H1 (cell line): ENCODE measurements at regions of chr2 and their contacts with region 1.

Region 1: DNA sequence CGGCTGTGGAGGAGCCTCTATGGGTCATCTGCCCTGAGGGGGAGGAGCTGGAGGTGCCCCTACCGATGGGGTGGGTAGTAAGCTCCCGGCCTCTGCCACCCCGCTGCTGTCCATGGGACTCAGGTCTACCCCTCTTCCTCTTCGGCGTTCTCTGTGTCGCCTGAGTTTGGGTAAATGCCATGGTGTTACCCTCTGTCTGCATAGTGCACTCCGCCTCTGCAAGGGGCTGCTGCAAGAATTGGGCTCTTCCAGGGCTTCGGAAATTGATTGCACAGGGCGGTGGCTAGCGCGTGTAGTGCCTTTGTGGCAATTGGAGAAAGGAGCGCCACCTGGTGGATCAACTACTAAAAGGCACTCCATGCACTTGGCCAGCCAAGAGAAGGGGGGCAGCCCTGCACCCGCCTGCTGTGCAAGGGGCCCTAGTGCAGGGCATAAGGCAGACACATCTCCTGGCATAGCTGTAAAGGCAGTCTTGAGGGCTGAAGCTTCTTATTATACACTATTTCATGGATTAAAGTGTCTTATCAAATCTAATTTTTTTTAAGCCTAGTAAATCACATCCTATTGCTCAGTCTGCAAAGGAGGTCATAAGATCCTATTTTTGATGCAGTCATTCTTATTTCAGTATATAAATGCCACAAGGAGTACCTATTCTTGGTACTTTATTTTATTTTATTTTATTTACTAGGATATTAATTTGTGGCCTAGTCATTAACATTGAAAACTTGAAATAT is 308.9 kb downstream of the PDE11A start:
- DNase-seq: peak; percentile 31 to 93
- H3K4me3 ChIP-seq: peak overlapping the region; percentile 15 to 51 (median 27); a peak in 7 of 8 replicates
- H3K27ac ChIP-seq: no peak overlapping the region
- H3K4me1 ChIP-seq: peaks cover 0 to 6% (median under 1%) of the 10 kb centered on the region in 4 experiments; a peak in 5 of 7 replicates
- H3K27me3 ChIP-seq: peaks cover 0 to 2% (median 1%) of the 10 kb centered on the region in 4 experiments; a peak in 2 of 7 replicates
- CTCF ChIP-seq: peak; percentile 74 to 93 (median 78)
- EP300 ChIP-seq: no peak
- POLR2A ChIP-seq: no peak
- RAD21 ChIP-seq: peak; percentile 43 to 65

Region 2: GRCh38 chr2:177263451-177264208 is 500.1 kb before region 1 on chr2:
- CTCF ChIA-PET with region 1: no interaction called
- POLR2A ChIA-PET with region 1: no interaction called
- DNase-seq: peak; percentile 44 to 88
- H3K4me3 ChIP-seq: peak overlapping the region; percentile 71 to 82 (median 78)
- H3K27ac ChIP-seq: peak overlapping the region; percentile 78; the same call in 1 of the 2 replicates
- H3K4me1 ChIP-seq: peaks cover 0 to 2% (median 2%) of the 10 kb centered on the region in 4 experiments; a peak in 3 of 7 replicates
- H3K27me3 ChIP-seq: no peaks in the 10 kb centered on the region
- CTCF ChIP-seq: peak; percentile 47 to 57 (median 50); a peak in 3 of 4 replicates
- EP300 ChIP-seq: no peak; a peak in 1 of 3 replicates
- POLR2A ChIP-seq: peak; percentile 34 to 73
- RAD21 ChIP-seq: peak; percentile 31 to 55

Region 3: GRCh38 chr2:177407031-177407430 is 356.7 kb before region 1 on chr2:
- CTCF ChIA-PET with region 1: no interaction called
- POLR2A ChIA-PET with region 1: no interaction called
- DNase-seq: no peak
- H3K4me3 ChIP-seq: no peak overlapping the region
- H3K27ac ChIP-seq: no peak overlapping the region
- H3K4me1 ChIP-seq: no peaks in the 10 kb centered on the region
- H3K27me3 ChIP-seq: no peaks in the 10 kb centered on the region
- CTCF ChIP-seq: no peak
- EP300 ChIP-seq: no peak
- POLR2A ChIP-seq: no peak
- RAD21 ChIP-seq: no peak

Region 4: DNA sequence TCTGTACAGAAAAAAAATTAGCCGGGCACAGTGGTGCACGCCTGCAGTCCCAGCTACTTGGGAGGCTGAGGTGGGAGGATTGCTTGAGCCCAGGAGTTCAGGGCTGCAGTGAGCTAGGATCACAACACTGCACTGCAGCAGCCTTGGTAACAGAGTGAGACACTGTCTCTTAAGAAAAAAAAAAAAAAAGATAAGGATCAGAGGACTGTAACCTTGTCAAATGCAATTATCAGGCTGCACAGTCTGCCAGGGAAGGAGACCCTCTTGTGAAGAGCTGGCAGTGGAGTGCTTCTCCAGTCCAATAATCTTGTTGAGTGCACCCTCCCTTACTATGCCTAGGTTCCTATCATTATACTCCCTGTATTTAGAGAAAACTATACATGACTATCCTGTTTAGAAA is 21.8 kb before region 1 on chr2:
- CTCF ChIA-PET with region 1: interaction called, 10 read pairs
- POLR2A ChIA-PET with region 1: no interaction called
- DNase-seq: no peak
- H3K4me3 ChIP-seq: no peak overlapping the region
- H3K27ac ChIP-seq: no peak overlapping the region
- H3K4me1 ChIP-seq: no peaks in the 10 kb centered on the region
- H3K27me3 ChIP-seq: peaks cover 0 to 5% (median 0%) of the 10 kb centered on the region in 4 experiments; a peak in 5 of 7 replicates
- CTCF ChIP-seq: no peak
- EP300 ChIP-seq: no peak
- POLR2A ChIP-seq: no peak
- RAD21 ChIP-seq: no peak

Region 5: DNA sequence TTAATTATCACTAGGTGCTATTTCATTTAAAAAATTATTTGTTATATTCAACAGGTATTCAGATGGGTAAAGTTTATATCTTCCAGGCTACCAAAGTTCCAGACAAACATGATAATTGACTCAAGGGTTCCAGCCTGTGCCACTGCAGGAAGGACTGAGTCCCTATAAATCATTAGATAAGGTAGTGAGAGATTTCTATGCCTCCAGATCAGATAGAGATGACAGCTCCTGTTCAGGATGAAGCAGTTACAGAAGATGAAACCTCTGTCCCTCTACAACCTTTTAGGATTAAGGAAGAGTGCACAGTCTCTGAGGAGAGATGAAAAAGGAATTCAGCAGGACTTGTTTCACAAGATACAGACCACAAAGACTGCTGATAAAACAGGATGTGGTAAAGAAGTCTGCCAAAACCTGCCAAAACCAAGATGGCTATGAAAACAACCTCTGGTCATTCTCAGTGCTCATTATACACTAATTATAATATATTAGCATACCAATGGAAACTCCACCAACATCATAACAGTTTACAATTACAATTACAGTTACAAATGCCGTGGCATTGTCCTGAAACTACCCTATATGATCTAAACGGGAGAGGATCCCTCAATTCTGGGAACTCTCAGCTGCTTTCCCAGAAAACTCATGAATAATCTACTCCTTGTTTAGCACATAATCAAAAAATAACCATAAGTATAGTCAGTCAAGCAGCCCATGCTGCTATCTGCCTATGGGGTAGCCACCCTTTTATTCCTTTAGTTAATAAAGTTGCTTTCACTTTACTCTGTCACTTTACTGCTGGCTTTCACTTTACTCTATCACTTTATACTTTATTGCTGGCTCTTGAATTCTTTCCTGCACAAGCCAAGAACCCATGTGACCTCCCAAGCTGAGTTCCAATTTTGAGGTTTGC is 20.4 kb after region 1 on chr2:
- CTCF ChIA-PET with region 1: no interaction called
- POLR2A ChIA-PET with region 1: no interaction called
- DNase-seq: no peak
- H3K4me3 ChIP-seq: no peak overlapping the region
- H3K27ac ChIP-seq: no peak overlapping the region
- H3K4me1 ChIP-seq: no peaks in the 10 kb centered on the region
- H3K27me3 ChIP-seq: no peaks in the 10 kb centered on the region
- CTCF ChIP-seq: no peak
- EP300 ChIP-seq: no peak
- POLR2A ChIP-seq: no peak
- RAD21 ChIP-seq: no peak

Region 6: GRCh38 chr2:177908182-177908581 is 144.5 kb after region 1 on chr2:
- CTCF ChIA-PET with region 1: no interaction called
- POLR2A ChIA-PET with region 1: no interaction called
- DNase-seq: no peak
- H3K4me3 ChIP-seq: no peak overlapping the region
- H3K27ac ChIP-seq: no peak overlapping the region
- H3K4me1 ChIP-seq: no peaks in the 10 kb centered on the region
- H3K27me3 ChIP-seq: no peaks in the 10 kb centered on the region; a peak in 1 of 7 replicates
- CTCF ChIP-seq: peak; percentile 12 to 27 (median 14); a peak in 3 of 4 replicates
- EP300 ChIP-seq: no peak
- POLR2A ChIP-seq: no peak
- RAD21 ChIP-seq: 0 out of 4 replicates have a peak, but pooled peaks of 1 of the 2 experiments have one; percentile 13